ENCODE measurements at regions of chr4 and their contacts with region 1.

Region 1: DNA sequence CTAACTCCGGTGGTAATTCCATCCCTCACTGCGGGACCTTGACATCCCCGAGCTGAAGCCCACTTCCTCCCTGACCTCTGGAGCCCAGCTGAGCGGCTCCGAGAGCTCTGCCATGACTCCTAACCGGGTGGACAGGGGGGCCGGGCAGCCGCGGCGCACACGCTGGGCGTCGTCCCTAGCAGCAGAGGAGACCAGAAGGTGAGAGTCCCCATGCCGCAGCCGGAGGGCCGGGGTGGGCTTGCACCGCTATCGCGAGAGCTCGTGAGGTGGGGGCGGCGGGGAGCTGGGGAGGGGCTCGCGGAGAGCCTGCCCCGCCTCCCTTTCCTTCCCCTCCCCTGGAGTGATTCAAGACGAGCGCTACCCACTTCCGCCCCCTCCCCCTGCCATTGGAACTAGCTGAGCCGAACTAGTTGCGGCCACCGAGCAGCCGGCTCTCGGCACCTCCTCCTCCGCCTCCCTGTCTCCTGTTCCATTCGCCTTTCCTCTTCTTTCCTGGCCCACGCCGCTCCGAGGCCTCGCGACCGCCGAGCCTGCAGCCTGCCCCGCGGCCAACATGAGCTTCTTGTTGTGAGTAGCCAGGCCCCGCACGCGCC is at the start of gene MOB1B:
- DNase-seq: peak; percentile 91
- H3K4me3 ChIP-seq: peak within 1 kb of the TSS; percentile 95
- H3K27ac ChIP-seq: peak within 1 kb of the TSS; percentile 46
- H3K4me1 ChIP-seq: peaks cover 15% of the 10 kb centered on the region
- CTCF ChIP-seq: 0 out of 2 replicates have a peak, but pooled peaks have one; percentile 24
- total RNA-seq, gene MOB1B: 3.9 and 4.7 TPM in 2 replicates

Region 2: GRCh38 chr4:70768301-70768948 is 133.7 kb before region 1 on chr4:
- CTCF ChIA-PET with region 1: no interaction called
- POLR2A ChIA-PET with region 1: no interaction called
- intact Hi-C with region 1: no loop called
- DNase-seq: no peak
- H3K4me3 ChIP-seq: no peak overlapping the region
- H3K27ac ChIP-seq: no peak overlapping the region
- H3K4me1 ChIP-seq: peaks cover 7% of the 10 kb centered on the region
- CTCF ChIP-seq: no peak

Region 3: DNA sequence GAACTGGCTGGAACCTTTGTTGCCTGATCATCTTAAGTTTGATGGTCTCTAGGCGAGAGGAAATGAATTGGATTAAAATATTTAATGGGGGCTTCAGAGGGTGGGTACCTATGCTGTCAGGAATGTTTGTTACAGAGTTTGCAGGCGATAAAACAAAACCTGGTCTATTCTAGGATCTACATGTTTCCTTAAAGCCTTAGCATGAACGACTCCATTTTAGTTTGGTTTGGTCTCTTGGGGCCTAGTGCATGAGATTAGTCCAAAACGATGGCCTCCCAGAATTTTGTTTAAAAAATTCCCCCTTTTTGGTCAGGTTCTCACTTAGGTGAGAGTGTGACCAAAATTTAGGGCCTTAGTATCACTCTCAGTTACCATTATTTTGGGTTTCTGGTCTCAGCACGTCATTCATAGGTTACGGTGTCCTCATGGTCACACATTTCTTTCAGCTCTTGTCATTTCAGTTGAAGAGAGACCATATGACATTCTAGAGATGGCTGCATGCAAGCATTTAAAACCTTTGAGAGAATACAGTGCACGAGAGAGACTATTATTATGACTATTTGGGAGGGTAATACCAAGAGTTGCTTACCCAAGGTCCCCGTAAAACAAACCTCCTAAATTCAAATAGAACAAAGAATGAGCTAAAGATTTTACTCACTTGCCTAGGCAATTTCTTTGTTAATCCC is 13.9 kb after region 1 on chr4:
- CTCF ChIA-PET with region 1: no interaction called
- POLR2A ChIA-PET with region 1: interaction called, 11 read pairs
- intact Hi-C with region 1: no loop called
- DNase-seq: no peak
- H3K4me3 ChIP-seq: no peak overlapping the region
- H3K27ac ChIP-seq: no peak overlapping the region
- H3K4me1 ChIP-seq: peaks cover 19% of the 10 kb centered on the region
- CTCF ChIP-seq: no peak

Measured in OCI-LY7 (cell line).